H1 (cell line): ENCODE measurements at regions of chr1 and their contacts with region 1.

Region 1: DNA sequence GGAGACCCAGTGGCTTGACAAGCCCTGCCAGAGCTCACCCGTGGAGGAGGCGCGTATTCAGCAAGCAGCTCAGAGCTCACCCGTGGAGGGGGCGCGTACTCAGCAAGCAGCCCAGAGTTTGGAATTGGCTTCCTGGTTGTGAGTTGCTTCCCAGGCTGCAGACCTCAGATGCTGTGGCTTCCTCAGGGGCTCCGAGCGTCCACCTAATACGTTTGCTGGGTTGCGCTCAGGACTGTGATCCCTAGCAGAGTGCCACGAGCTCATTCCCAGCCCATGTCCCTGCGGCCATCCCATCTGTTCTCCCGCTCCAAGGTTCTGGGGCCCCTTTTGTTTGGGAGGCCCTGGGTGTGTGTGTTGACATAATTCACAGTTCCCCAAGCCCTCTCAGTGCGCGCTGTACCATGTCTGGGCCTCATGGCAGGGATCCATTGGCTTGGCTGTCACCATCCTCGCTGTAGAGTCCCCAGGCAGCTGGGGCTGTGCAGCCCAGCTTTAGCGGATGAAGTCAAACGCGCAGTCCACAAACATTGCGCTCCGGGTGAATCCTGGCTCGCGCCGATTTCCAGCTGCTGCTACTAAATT is 3.6 kb downstream of the AJAP1 start:
- DNase-seq: no peak
- H3K4me3 ChIP-seq: peak overlapping the region in 3 of 4 experiments; percentile 1 to 29 (median 5); a peak in 2 of 8 replicates
- H3K27ac ChIP-seq: no peak overlapping the region
- H3K4me1 ChIP-seq: peaks cover 4 to 32% (median 21%) of the 10 kb centered on the region in 4 experiments
- H3K27me3 ChIP-seq: peaks cover 22 to 56% (median 53%) of the 10 kb centered on the region in 4 experiments
- CTCF ChIP-seq: no peak
- EP300 ChIP-seq: no peak
- POLR2A ChIP-seq: no peak
- RAD21 ChIP-seq: no peak

Region 2: DNA sequence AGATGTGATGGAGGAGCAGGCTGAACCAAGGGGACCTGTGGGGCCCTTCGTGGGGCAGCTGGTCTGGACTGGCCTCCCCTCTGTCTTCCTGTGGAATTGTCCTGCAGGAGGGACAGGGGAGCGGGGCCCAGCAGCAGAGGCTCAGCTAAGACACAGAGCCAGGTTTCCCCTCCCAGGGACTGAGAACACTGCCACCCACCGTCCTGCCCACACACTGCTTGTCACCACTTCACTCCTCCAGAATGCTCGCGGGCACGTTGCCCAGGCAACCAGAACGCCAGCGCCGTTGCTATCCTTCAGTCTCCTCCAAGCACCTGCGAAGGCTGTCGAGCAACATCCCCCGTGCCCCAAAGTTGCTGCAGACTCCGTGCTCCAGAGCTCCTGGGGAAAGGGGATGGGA is 42.8 kb after region 1 on chr1:
- CTCF ChIA-PET with region 1: interaction called, 15 read pairs
- POLR2A ChIA-PET with region 1: no interaction called
- DNase-seq: no peak
- H3K4me3 ChIP-seq: no peak overlapping the region
- H3K27ac ChIP-seq: no peak overlapping the region
- H3K4me1 ChIP-seq: no peaks in the 10 kb centered on the region; a peak in 1 of 7 replicates
- H3K27me3 ChIP-seq: no peaks in the 10 kb centered on the region
- CTCF ChIP-seq: peak in 2 of 3 experiments; percentile 12 to 32; a peak in 2 of 4 replicates
- EP300 ChIP-seq: no peak
- POLR2A ChIP-seq: no peak
- RAD21 ChIP-seq: no peak